Activated T-helper 1 cell treated with anti-CD3 and anti-CD28 coated beads, Interleukin-12 subunit alpha, Interleukin-12 subunit beta, Interleukin-2, Interleukin-4 antibody, amounts not matched to agents 30 ng/mL and 10 ng/mL and 1 ng/mL, durations not matched to agents 14 hours and 24 hours and 36 hours (primary cell): ENCODE measurements at regions of chr17 and their contacts with region 1.

Region 1: DNA sequence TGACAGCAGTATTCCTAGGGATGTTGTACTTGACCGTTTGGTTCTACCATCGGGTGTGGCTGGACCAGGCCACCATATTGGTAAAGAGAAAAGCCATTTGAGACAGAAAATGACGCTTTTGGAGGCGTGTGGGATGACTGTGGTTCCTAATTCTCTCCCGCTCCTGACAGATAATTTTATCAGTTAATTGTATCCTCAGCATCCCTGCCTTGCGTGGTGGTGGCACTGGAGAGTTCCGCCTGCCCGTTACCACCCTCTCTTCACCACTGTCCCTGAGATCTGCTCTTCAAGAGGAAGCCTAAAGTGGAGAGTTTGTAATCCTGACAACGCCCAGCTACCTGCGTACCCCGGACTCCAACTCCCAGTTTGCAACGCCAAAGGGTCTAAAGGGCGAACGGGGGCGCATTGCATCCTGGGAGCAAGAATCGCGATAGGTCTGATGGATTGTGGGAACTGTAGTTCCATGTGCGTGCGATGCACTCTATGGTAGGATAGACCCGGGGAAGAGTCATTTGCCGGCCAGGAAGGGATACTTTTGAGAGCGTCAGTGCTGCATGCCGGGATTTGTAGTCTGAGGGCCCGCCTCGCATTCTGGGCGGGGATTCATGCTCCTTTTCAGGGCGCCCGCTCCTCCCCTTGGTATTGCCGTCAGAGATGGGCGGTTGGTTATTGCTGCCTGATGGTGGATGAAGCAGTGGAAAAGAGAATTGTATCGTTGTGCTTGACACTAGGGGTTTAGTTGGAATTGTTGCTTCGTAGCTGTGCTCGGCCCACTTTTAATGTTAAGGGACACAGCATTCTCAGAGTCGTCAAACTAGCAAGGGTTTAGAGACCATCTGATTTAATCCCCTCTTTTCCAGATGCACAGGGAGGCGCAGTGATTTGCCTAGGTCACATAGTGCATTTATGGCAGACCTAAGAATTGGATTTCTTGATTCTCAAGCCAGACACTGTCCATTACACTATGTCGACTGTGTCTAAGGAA is 965 bp upstream of the PHF12 start:
- DNase-seq: peak; percentile 96
- H3K4me3 Mint-ChIP-seq: no peak overlapping the region
- H3K27ac Mint-ChIP-seq: no peak overlapping the region
- H3K4me1 Mint-ChIP-seq: peaks cover 15% of the 10 kb centered on the region
- H3K27me3 Mint-ChIP-seq: no peaks in the 10 kb centered on the region

Region 2: DNA sequence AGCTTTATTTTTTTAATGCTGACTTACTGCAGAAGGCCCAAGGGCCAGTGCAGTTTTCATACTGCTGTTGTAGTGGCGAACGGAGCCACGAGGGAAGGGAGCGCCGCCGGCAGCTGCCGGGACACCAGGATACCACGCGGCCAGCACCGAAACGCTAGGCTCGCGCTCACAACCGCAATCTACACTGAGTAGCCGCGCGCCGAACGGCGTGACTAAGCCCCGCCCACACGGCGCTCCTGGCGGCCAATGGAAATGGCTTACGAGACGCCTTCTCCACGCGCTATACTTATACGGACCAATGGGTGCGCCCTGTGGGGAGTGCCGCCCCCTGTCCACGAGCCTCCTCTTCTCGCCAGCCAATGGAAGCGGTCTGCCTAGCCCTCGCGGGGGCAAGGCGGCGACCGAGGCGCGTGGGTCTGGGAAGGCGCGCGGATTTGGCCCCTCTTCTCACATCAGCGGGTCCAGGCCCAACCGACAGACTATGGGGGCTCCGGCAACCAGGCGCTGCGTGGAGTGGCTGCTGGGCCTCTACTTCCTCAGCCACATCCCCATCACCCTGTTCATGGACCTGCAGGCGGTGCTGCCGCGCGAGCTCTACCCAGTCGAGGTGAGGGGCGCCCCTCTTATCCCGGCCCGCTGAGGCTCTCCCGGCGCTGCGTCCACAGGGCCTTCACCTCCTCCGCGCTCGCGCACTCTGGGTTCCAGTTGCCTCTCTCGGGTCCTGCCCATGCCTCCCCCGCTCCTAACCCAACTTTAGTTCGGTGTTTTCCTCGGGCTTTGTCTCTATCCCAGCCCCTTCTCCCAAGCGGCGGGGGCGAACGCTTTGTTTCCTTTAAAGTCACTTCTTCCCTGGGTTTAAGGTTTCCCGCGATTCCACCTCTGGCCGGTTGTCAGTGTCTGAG is 633.3 kb before region 1 on chr17 and contains the start of gene TMEM97:
- intact Hi-C with region 1: loop called (anchors 5 kb)
- DNase-seq: peak; percentile 96
- H3K4me3 Mint-ChIP-seq: peak within 1 kb of the TSS; percentile 96
- H3K27ac Mint-ChIP-seq: peak within 1 kb of the TSS; percentile 94
- H3K4me1 Mint-ChIP-seq: peaks cover 48% of the 10 kb centered on the region
- H3K27me3 Mint-ChIP-seq: no peaks in the 10 kb centered on the region
- total RNA-seq, gene TMEM97: 60.9 and 64.5 TPM in 2 replicates

Region 3: DNA sequence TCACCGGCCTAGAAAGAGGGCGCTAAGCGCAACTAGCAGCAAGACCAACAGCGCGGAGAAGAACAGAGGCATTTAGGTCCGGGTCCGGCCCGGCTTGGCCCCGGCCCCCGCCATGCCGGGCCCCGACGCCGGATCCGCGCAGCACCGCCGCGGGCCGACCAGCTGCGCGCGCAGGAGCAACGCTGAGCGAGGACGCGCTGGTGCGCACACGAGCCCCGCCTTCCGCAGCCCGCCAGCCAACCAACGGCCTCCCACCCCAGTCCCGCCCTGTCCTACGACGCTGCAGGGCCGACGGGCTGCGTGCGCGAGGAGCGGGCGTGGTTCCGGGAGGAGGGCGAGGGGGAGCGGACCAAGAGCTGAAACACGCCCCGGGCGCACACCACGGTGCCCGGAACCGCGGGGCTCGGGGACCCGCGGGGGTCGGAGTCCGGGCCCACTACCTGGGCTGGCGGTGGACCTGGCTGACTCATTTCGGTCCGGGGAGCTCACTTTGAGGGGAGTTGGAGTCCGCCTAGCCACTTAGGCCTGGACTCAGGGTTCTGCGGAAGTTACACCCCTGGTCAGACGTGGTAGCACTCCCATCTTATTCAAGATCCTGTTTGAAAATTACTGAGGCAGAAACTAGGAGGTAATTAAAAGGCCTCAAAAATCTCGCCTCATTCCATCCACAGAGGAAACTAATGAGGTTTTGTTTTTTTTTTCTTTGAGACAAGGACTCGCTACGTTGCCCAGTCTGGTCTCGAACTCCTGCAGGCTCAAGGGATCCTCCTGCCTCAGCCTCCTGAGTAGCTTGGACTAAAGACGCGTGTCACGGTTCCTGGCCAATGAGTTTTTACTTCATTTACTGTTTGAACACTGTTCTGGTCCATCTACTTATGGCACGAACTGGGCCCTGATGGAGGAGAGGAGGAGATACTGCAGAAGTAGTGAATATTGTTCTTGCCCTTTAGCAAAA is 307.0 kb before region 1 on chr17 and contains the start of gene BLTP2:
- intact Hi-C with region 1: loop called (anchors 1 kb)
- DNase-seq: peak; percentile 95
- H3K4me3 Mint-ChIP-seq: peak within 1 kb of the TSS; percentile 91
- H3K27ac Mint-ChIP-seq: peak within 1 kb of the TSS; percentile 82
- H3K4me1 Mint-ChIP-seq: peaks cover 33% of the 10 kb centered on the region
- H3K27me3 Mint-ChIP-seq: no peaks in the 10 kb centered on the region
- total RNA-seq, gene BLTP2: 210 and 212 TPM in 2 replicates

Region 4: GRCh38 chr17:28726226-28727130 is 225.8 kb before region 1 on chr17 and contains the start of gene TLCD1:
- intact Hi-C with region 1: loop called (anchors 1 kb)
- DNase-seq: peak; percentile 91
- H3K4me3 Mint-ChIP-seq: peak within 1 kb of the TSS; percentile 97
- H3K27ac Mint-ChIP-seq: peak within 1 kb of the TSS; percentile 98
- H3K4me1 Mint-ChIP-seq: peaks cover 67% of the 10 kb centered on the region
- H3K27me3 Mint-ChIP-seq: no peaks in the 10 kb centered on the region
- total RNA-seq, gene TLCD1: 9.5 and 11.5 TPM in 2 replicates

Region 5: DNA sequence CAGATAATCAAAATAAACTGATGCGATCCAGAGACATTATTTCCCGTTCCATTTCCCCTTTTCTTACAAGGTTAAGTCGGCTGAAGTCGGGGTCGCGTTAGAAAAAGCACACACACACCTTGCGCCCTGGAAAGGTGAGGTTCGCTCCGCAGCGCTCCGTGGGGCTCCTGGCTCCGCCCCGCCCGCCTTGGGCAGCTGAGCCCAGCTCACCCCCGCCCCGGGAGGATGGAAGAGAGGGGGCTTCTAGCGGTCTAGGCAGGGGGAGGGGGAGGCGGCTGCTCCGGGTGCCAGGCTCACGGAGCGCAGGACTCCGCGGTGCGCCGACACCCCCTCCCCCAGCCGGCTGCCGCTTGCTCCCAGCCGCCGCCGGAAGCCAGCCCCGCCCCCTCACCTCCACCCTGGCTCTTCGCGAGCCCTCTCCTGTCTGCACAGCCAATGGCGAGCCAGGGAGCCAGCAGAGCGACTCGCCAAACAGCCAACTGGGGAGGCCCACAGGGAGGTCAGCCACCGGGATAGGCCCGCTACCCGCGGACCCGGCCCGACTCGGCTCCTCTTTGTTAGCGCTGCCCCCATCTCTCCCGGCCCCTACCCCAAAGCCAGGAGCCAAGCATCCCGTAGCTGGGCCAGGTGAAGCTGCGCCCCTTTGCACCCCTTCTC is 140.1 kb before region 1 on chr17:
- intact Hi-C with region 1: loop called (anchors 2 kb)
- DNase-seq: peak; percentile 95
- H3K4me3 Mint-ChIP-seq: peak overlapping the region; percentile 91
- H3K27ac Mint-ChIP-seq: peak overlapping the region; percentile 97
- H3K4me1 Mint-ChIP-seq: peaks cover 43% of the 10 kb centered on the region
- H3K27me3 Mint-ChIP-seq: no peaks in the 10 kb centered on the region

Region 6: GRCh38 chr17:28902819-28903545 is 49.3 kb before region 1 on chr17 and contains the start of gene DHRS13:
- intact Hi-C with region 1: loop called (anchors 1 kb)
- DNase-seq: peak; percentile 93
- H3K4me3 Mint-ChIP-seq: peak within 1 kb of the TSS; percentile 91
- H3K27ac Mint-ChIP-seq: peak within 1 kb of the TSS; percentile 79
- H3K4me1 Mint-ChIP-seq: peaks cover 39% of the 10 kb centered on the region
- H3K27me3 Mint-ChIP-seq: no peaks in the 10 kb centered on the region
- total RNA-seq, gene DHRS13: 34.6 and 34.9 TPM in 2 replicates

Region 7: DNA sequence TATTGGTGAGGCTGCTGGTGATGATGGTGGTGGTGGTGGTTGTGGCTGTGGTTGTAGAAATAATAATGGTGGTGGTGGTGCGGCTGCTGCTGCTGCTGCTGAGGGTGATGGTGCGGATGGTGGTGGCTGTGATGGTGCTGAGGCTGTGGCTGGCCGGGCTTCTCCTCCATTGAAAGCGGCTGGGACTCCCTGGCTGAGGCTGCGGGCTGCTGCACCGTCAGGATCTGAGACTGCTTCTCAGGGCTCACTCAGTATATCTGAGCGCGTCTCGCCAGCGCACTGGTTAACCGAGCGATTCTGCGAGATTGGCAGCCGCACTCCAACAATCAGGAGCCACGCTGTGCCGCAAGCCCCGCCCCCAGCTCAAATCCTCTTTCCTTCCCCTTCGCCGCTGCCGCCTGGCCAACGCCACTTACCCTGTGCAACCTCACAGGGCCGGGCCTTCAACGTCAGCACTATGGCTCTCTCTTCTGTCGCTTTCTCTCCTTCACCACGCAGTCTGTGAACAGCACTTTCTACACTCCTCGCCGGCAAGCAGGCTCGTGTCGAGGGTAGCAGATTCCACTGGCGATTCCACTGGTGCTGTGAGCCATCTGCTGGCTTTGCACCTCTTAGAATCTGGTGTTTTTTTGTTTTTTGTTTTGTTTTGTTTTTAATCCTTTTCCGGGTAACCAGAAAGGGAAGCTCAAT is 341.8 kb after region 1 on chr17 and contains the start of gene NUFIP2:
- intact Hi-C with region 1: loop called (anchors 1 kb)
- DNase-seq: peak; percentile 97
- H3K4me3 Mint-ChIP-seq: peak within 1 kb of the TSS; percentile 100
- H3K27ac Mint-ChIP-seq: peak within 1 kb of the TSS; percentile 99
- H3K4me1 Mint-ChIP-seq: peaks cover 43% of the 10 kb centered on the region
- H3K27me3 Mint-ChIP-seq: peaks cover 3% of the 10 kb centered on the region
- total RNA-seq, gene NUFIP2: 92.2 and 95.5 TPM in 2 replicates